ENCODE measurements at regions of chr6 and their contacts with region 1.

Region 1: DNA sequence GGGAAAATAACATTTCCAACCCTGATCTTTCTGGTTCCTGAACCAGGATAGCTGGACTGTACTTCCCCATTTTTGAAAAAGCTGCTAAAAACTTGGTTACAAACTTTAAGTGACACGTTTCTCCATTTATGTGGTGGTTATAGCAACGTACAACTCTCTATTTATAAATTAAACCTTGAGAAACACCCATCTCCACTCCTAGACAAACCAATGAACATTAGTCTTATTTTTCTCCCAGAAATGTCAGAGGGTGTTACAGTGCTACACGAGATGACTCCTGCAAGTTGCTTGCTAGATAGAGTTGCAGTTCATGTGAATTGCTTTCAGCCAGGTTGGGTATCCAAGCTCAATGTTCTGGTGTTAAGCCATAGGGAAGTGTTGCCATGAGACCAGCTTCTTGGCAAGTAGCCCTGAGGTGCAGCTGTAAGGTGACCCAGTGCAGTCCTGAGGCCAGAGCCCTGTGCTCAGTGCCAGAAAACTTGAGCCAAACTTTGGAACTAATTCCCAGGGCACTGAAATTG is 51.3 kb upstream of the REV3L start:
- DNase-seq: peak in 4 of 5 donors; percentile 73 to 87 (median 80)
- ATAC-seq: peak; percentile 90 to 96 (median 94)
- H3K4me3 ChIP-seq: no peak overlapping the region
- H3K27ac ChIP-seq: peak overlapping the region in 1 of 12 donors; percentile 53
- H3K4me1 ChIP-seq: peaks cover 0 to 36% (median 26%) of the 10 kb centered on the region in 12 donors
- H3K27me3 ChIP-seq: no peaks in the 10 kb centered on the region
- CTCF ChIP-seq: no peak
- POLR2A ChIP-seq: no peak

Region 2: DNA sequence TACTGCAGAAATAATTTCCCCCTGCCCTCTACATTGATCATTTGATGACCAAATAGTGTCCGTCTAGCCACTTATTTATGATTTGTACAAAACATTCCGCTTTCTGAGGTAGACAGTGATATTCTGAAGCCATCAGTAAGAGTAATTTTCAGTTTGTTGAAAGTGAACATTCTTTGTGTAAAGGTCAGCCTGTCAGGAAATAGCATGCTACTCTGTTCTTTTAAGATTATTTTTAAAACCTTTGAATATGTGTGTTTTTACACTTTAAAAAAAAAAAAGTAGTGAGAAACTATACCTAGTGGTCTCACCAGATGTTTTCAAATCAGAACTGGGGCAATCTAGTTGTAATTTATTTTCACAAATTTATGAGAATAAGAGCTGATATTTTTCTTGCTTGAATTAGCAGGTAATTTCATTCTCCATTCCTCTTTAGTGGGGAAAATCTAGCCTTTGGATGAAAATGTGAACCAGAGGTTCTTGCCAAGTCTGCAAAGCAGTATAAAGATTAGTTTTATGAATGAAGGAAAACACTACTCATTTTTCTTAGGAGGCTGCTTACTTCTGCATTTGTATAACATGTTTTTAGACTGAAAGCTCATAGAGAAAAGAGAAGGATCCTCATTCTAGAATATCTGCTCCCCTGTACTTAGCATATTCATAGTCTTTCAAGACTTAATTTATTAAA is 39.2 kb before region 1 on chr6:
- intact Hi-C with region 1: loop called in 1 of 10 experiments (anchors 5 kb)
- DNase-seq: no peak
- ATAC-seq: no peak
- H3K4me3 ChIP-seq: no peak overlapping the region
- H3K27ac ChIP-seq: peak overlapping the region in 3 of 12 donors; percentile 2 to 15 (median 4)
- H3K4me1 ChIP-seq: peaks cover 0 to 30% (median 12%) of the 10 kb centered on the region in 12 donors
- H3K27me3 ChIP-seq: no peaks in the 10 kb centered on the region
- CTCF ChIP-seq: no peak
- POLR2A ChIP-seq: no peak

Measured in heart left ventricle (tissue), 16 donors.